Esophagus muscularis mucosa (tissue), 4 donors: ENCODE measurements at regions of chr7 and their contacts with region 1.

Region 1: GRCh38 chr7:94344826-94345225 is 49.9 kb upstream of the COL1A2 start:
- DNase-seq: no peak
- H3K4me3 ChIP-seq: no peak overlapping the region
- H3K27ac ChIP-seq: no peak overlapping the region
- H3K4me1 ChIP-seq: peaks cover 5 to 39% (median 34%) of the 10 kb centered on the region in 4 donors
- H3K27me3 ChIP-seq: no peaks in the 10 kb centered on the region
- CTCF ChIP-seq: no peak
- EP300 ChIP-seq: no peak
- POLR2A ChIP-seq: no peak

Region 2: DNA sequence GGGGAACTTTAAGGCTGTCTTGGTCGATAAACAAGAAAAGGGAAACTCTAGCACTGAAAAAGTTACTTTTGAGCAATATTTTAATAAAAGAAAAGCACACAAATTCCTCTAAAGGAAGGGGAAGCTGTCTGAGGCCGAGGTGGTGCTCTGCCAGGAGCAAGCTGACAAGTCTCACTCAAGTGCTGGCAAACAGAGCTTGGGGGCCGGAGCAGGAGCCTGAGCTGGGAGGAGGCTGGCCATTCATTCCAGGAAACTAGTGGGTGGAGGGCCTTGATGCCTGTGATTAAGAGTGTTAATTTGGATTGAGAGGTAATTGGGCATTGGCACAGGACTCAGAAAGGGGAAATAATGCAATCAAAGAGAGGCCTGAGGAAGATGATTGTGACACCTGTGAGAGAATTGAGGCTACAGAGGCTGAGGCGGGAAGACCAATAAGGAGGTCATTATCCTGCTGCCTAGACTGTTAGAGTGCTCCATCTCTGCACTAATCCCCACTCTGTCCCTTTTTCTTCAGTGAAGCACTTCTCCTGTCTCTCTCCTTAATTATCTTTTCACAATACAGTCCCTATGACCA is 105.1 kb before region 1 on chr7:
- intact Hi-C with region 1: no loop called
- DNase-seq: no peak
- H3K4me3 ChIP-seq: no peak overlapping the region
- H3K27ac ChIP-seq: peak overlapping the region in 1 of 4 donors; percentile 25
- H3K4me1 ChIP-seq: peaks cover 0 to 3% (median 0%) of the 10 kb centered on the region in 4 donors
- H3K27me3 ChIP-seq: no peaks in the 10 kb centered on the region
- CTCF ChIP-seq: no peak
- EP300 ChIP-seq: no peak
- POLR2A ChIP-seq: no peak

Region 3: GRCh38 chr7:94307399-94308048 is 37.3 kb before region 1 on chr7:
- intact Hi-C with region 1: loop called (anchors 5 kb)
- DNase-seq: no peak
- H3K4me3 ChIP-seq: no peak overlapping the region
- H3K27ac ChIP-seq: no peak overlapping the region
- H3K4me1 ChIP-seq: peaks cover 9 to 21% (median 19%) of the 10 kb centered on the region in 4 donors
- H3K27me3 ChIP-seq: no peaks in the 10 kb centered on the region
- CTCF ChIP-seq: no peak
- EP300 ChIP-seq: no peak
- POLR2A ChIP-seq: no peak

Region 4: DNA sequence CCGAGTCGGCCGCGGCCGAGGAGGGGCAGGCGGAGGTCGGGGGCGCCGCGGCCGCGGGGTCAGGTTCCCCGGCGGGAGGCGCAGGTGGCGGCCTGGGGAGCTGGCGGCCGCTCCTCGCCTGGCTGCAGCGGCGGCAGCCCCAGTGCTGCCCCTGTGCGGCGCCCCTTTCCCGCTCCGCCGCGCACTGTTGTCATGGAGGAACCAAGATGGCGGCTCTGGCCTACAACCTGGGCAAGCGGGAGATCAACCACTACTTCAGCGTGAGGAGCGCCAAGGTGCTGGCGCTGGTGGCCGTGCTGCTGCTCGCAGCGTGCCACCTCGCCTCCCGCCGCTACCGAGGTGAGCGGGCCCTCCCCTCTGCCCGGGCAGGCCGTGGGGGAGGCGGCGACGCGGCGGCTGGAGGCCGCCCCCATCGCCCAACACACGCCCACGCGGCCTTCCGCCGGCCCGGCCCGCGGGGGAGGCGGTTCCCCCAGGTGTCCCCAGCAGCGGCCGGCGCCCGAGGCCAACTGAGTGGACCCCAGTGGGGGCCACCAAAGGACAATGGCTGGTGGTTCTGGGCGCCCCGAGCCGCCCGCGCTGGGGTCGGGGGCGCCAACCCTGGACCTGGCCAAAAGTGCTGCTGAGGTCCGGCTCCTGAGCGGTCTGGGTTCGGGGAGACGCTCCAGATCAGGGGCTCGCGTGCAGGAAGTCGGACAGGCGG is 165.2 kb after region 1 on chr7:
- intact Hi-C with region 1: no loop called
- DNase-seq: peak; percentile 93
- H3K4me3 ChIP-seq: peak overlapping the region; percentile 88 to 96 (median 94)
- H3K27ac ChIP-seq: peak overlapping the region; percentile 91 to 96 (median 92)
- H3K4me1 ChIP-seq: peaks cover 18 to 38% (median 29%) of the 10 kb centered on the region in 4 donors
- H3K27me3 ChIP-seq: no peaks in the 10 kb centered on the region
- CTCF ChIP-seq: peak in 1 of 3 experiments; percentile 27
- EP300 ChIP-seq: no peak
- POLR2A ChIP-seq: no peak